Sciatic nerve (tissue), 2 donors: ENCODE measurements at regions of chr9 and their contacts with region 1.

Region 1: DNA sequence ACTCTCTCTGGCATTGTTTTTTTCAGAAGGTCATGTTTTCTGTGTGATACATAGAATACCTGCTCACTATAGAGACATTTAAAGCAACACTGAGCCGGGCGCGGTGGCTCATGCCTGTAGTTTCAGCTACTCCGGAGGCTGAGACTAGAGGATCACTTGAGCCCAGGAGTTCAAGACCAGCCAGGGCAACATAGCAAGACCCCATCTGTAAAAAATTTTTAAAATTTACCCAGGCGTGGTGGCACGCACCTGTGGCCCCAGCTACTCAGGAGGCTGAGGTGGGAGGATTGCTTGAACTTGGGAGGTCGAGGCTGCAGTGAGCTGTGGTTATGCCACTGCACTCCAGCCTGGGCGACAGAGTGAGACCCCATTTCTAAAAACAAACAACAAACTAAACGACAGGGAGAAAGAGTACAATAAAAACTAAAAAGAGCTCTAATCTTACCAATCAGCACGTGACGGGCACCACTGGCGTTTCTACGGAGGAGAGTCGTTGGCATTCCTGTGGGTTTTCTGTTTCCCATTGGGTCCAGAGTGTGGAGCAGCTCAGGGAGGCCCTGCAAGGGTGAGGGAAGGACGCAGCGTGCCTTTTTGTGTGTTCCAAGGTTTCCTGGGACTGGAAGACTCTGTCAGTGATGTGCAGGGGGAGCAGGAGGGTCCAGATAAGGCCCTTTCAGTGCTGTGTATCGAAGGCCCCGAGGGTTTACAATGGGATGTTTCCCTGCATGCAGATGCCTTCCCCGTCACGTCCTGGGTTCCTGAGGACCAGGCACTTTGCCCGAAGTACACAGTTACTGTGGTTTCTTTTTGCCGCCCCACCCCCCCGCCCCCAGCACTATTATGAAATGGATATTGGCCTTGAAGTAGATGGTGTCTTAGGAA is 7.2 kb upstream of the RNU6ATAC start:
- DNase-seq: no peak
- ATAC-seq: peak; percentile 61

Region 2: DNA sequence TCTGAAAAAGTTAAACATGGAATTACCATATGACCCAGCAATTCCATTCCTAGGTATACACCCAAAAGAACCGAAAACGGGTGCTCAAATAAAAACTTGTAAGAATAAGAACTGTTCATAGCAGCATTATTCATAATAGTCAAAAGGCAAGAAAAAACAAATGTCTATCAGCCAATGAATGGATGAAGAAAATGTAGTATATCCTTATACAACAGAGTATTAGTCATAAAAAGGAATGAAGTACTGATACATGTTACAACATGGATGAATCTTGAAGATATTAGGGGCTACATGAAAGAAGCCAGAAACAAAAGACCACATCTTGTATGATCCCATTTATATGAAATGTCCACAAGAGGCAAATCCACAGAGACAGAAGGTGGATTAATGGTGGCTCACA is 88.1 kb before region 1 on chr9:
- intact Hi-C with region 1: no loop called
- DNase-seq: no peak
- ATAC-seq: no peak

Region 3: DNA sequence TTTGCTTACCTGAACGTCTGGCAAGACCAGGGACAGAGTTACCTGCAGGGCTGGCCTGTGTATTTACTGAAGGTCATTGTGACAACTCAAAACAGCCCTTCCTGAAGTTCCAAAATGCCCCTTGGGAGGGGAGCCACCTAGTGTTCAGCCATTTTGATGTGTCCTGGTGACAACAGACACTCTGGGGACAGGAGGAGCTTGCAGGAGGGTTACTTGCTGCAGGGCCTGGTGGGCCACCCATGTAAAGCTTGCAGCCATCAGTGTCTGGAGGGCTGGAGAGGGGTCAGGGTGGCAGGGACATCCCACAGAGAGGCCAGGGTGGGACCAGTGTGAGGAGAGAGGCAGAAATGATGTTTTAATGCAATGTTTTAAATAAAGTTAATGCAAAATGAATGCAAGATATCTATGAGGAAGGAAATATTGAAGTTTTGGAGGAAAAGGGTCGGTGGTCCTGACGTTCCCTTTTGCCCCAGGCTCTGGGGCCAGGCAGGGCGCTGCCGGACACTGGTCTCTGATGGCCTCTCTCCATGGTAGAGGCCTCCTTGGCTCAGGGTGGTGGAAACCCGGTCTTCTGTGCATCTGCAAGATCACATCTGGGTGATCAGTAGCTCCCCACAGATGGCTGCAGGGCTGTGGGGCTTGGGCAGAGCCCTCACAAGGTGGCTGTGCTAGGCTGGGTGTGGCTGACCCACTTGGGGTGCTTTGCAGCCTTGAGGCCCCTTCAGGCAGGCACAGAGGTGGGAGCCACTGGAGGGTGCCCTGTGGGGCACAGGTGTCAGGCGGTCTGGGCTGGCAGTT is 46.5 kb after region 1 on chr9:
- intact Hi-C with region 1: no loop called
- DNase-seq: peak; percentile 52
- ATAC-seq: no peak

Region 4: DNA sequence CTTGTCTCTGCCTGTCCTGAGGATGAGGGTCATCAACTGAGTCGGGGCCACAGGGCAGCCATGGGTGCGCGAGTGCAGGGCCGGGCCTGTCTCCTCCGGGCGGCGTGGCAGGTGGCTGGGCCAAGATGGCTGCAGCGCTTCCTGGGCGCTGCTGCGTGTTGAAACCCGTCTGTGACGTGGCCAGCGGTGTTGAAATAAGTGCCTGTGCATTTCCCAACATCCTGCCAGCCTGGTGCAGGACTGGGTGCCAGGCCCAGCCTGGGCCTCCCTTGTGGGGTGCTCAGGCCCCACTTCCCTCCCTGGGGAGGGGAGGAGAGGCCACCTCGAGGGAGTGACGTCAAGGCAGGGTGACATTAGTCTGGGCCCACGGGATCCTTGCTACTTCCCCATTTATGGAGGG is 200.2 kb after region 1 on chr9:
- intact Hi-C with region 1: loop called (anchors 5 kb)
- DNase-seq: peak; percentile 86
- ATAC-seq: peak; percentile 48

Region 5: GRCh38 chr9:134407123-134407808 is 235.7 kb after region 1 on chr9:
- intact Hi-C with region 1: no loop called
- DNase-seq: peak; percentile 94
- ATAC-seq: peak; percentile 86

Region 6: DNA sequence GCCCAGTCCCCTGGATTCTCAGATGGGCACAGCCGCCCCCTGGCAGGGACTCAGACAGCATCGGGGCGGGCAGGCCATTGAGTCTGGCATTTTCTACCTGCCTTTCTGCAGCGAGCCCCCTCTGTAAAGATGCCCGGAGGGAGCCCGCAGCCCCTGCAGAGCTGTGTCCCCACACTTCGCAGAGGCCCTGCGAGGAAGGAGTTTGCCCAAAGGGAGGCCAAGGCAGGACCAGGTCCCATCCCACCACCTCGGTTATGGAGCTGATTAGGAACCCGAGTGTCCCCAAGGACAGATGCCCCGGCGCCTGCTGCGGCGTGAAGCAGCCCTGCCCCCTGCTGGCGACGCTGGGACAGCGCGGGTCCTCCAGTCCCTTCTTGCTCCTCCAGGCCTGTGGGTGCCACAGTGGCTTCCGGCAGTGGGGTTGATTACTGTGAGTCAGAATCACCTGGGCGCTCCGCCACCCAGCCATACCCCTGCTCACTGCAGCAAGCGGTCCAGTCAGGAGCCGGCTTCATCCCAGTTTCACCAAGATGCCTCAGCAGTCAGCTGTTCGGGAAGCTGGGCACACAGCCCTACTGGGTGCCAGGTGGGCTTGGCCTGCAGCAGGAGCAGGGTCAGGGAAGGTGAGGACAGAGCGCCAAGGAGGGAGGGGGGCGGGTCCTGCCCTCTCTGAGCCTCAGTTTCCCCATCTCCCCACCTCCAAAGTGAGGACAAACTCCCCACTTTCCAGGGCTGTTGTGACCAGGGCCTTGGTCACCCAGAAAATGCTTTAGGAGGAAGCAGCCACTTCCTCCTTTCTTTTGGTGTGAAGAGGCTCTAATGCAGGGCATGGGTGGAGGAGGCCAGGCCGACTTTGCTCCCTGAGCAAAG is 271.8 kb after region 1 on chr9:
- intact Hi-C with region 1: loop called (anchors 2 kb)
- DNase-seq: peak; percentile 91
- ATAC-seq: peak; percentile 87